ENCODE measurements at regions of chr6 and their contacts with region 1.

Region 1: GRCh38 chr6:24902782-24903181 is 33.0 kb downstream of the RIPOR2 start:
- DNase-seq: no peak
- ATAC-seq: no peak
- H3K4me3 ChIP-seq: no peak overlapping the region
- H3K4me3 Mint-ChIP-seq: peak overlapping the region; percentile 30 to 97 (median 59)
- H3K27ac ChIP-seq: peak overlapping the region; percentile 53
- H3K27ac Mint-ChIP-seq: peak overlapping the region; percentile 32 to 99 (median 91)
- H3K4me1 ChIP-seq: peaks cover 81 to 96% of the 10 kb centered on the region in 2 donors
- H3K4me1 Mint-ChIP-seq: peaks cover 69 to 99% (median 96%) of the 10 kb centered on the region in 7 donors
- H3K27me3 ChIP-seq: no peaks in the 10 kb centered on the region
- H3K27me3 Mint-ChIP-seq: no peaks in the 10 kb centered on the region

Region 2: DNA sequence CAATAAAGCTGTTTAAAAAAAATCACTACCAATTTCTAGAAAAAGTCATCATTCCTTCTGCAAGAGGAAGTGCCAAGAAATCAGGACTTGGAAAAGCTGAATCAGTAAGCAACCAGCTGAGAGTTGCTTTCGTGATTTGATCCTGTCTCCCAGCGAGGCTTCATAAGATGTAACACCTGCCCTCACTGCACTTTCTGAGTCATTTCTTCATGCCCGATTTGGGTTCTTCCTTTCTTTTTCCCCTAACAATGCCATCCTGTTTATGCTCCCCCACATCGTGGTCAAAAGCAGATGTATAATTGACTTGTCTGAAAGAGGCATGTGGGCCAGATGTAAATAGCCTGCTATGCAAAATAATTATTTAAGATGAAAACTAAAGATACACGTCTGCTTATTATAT is 19.2 kb before region 1 on chr6:
- CTCF ChIA-PET with region 1: interaction called, 9 read pairs
- POLR2A ChIA-PET with region 1: interaction called, 22 read pairs
- intact Hi-C with region 1: loop called in 1 of 2 experiments (anchors 2 kb)
- DNase-seq: peak in 1 of 9 donors; percentile 34
- ATAC-seq: no peak
- H3K4me3 ChIP-seq: no peak overlapping the region
- H3K4me3 Mint-ChIP-seq: peak overlapping the region; percentile 29 to 82 (median 61)
- H3K27ac ChIP-seq: peak overlapping the region; percentile 57
- H3K27ac Mint-ChIP-seq: peak overlapping the region; percentile 3 to 93 (median 91)
- H3K4me1 ChIP-seq: peaks cover 59 to 63% of the 10 kb centered on the region in 2 donors
- H3K4me1 Mint-ChIP-seq: peaks cover 55 to 99% (median 90%) of the 10 kb centered on the region in 7 donors
- H3K27me3 ChIP-seq: no peaks in the 10 kb centered on the region
- H3K27me3 Mint-ChIP-seq: no peaks in the 10 kb centered on the region

Region 3: GRCh38 chr6:24891004-24891403 is 11.8 kb before region 1 on chr6:
- CTCF ChIA-PET with region 1: interaction called, 9 read pairs
- POLR2A ChIA-PET with region 1: interaction called, 22 read pairs
- intact Hi-C with region 1: loop called in 1 of 2 experiments (anchors 1 kb)
- DNase-seq: no peak
- ATAC-seq: no peak
- H3K4me3 ChIP-seq: no peak overlapping the region
- H3K4me3 Mint-ChIP-seq: peak overlapping the region in 9 of 10 donors; percentile 11 to 97 (median 48)
- H3K27ac ChIP-seq: peak overlapping the region; percentile 60
- H3K27ac Mint-ChIP-seq: peak overlapping the region in 8 of 9 donors; percentile 30 to 98 (median 88)
- H3K4me1 ChIP-seq: peaks cover 56 to 72% of the 10 kb centered on the region in 2 donors
- H3K4me1 Mint-ChIP-seq: peaks cover 58 to 97% (median 90%) of the 10 kb centered on the region in 7 donors
- H3K27me3 ChIP-seq: no peaks in the 10 kb centered on the region
- H3K27me3 Mint-ChIP-seq: no peaks in the 10 kb centered on the region

Region 4: DNA sequence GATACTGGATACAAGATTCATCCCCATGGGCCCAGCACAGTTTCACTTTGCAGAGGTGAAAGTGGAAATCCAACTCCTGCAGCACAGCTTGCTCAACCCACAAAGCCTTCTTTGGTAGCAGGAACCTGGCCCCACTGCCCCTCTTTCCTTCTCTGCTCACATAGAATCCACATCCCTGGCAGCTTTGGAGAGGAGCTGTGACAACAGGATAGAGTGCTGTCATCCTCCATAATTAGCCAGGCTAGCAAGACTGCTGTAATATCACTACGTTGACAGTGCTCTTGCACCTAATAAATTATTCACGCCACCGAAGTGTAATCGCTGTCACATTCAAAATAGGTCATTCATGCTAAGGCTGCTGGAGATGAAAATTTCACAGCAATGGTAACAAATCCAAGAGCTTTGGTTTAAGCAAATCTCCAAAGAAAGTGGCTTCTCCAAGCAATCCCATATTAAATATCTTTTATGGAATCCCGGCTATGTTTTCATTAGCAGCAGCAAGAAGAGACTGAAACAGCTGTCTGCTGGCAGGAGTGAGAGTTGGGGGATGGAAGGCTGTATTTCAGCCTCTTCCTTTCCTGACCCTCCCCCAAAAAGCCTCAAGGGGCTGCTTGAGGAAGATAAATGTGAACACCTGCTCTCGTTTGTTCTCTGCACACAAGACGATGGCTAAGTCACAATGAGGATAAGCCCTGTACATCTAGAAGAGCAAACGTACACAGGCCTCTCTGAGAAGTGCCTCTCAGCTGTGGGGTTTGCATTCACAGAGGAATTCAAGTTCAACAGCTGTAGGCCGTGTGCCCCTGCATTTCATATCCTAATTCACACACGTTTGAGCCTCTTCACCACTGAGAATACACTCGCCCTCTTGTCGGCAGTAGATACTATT is 16.5 kb after region 1 on chr6:
- CTCF ChIA-PET with region 1: interaction called, 5 read pairs
- POLR2A ChIA-PET with region 1: interaction called, 644 read pairs
- intact Hi-C with region 1: loop called in 1 of 2 experiments (anchors 2 kb)
- DNase-seq: no peak
- ATAC-seq: peak; percentile 53
- H3K4me3 ChIP-seq: peak overlapping the region; percentile 24
- H3K4me3 Mint-ChIP-seq: peak overlapping the region; percentile 74 to 97 (median 86)
- H3K27ac ChIP-seq: peak overlapping the region; percentile 71
- H3K27ac Mint-ChIP-seq: peak overlapping the region; percentile 61 to 98 (median 90)
- H3K4me1 ChIP-seq: peaks cover 90% of the 10 kb centered on the region in 2 donors
- H3K4me1 Mint-ChIP-seq: peaks cover 79 to 100% (median 93%) of the 10 kb centered on the region in 7 donors
- H3K27me3 ChIP-seq: no peaks in the 10 kb centered on the region
- H3K27me3 Mint-ChIP-seq: no peaks in the 10 kb centered on the region